ENCODE measurements at regions of chr15 and their contacts with region 1.

Region 1: DNA sequence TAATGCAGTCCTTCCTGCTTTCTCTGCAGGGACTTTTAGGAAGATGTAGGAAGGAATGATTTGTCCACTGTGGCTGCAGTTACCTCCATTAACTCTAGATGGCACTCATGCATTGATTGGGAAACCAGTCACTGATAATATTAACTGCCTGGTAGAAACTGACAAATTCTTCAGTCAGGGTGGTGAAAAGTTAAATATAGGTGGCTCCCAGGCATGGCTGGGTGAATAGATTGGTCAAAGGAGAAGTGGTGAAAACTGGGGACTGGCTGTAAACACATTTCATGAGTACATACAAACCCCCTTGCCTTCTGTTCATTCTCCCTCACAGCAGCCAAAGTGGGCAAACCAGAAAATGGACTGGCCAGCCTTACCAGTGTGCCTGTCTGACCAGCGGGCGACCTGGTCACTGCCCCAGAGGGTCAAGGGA is 333.4 kb downstream of the THSD4 start:
- DNase-seq: no peak
- H3K4me3 ChIP-seq: no peak overlapping the region
- H3K27ac ChIP-seq: no peak overlapping the region
- H3K4me1 ChIP-seq: peaks cover 0 to 4% (median 4%) of the 10 kb centered on the region in 4 donors
- H3K27me3 ChIP-seq: no peaks in the 10 kb centered on the region
- CTCF ChIP-seq: peak; percentile 85 to 93 (median 89)
- EP300 ChIP-seq: no peak
- POLR2A ChIP-seq: no peak

Region 2: GRCh38 chr15:71651750-71652186 is 203.1 kb after region 1 on chr15:
- intact Hi-C with region 1: loop called (anchors 2 kb)
- DNase-seq: peak; percentile 90
- H3K4me3 ChIP-seq: no peak overlapping the region
- H3K27ac ChIP-seq: no peak overlapping the region
- H3K4me1 ChIP-seq: peaks cover 6 to 30% (median 23%) of the 10 kb centered on the region in 4 donors
- H3K27me3 ChIP-seq: no peaks in the 10 kb centered on the region
- CTCF ChIP-seq: peak; percentile 46 to 62 (median 58)
- EP300 ChIP-seq: no peak
- POLR2A ChIP-seq: no peak

Region 3: DNA sequence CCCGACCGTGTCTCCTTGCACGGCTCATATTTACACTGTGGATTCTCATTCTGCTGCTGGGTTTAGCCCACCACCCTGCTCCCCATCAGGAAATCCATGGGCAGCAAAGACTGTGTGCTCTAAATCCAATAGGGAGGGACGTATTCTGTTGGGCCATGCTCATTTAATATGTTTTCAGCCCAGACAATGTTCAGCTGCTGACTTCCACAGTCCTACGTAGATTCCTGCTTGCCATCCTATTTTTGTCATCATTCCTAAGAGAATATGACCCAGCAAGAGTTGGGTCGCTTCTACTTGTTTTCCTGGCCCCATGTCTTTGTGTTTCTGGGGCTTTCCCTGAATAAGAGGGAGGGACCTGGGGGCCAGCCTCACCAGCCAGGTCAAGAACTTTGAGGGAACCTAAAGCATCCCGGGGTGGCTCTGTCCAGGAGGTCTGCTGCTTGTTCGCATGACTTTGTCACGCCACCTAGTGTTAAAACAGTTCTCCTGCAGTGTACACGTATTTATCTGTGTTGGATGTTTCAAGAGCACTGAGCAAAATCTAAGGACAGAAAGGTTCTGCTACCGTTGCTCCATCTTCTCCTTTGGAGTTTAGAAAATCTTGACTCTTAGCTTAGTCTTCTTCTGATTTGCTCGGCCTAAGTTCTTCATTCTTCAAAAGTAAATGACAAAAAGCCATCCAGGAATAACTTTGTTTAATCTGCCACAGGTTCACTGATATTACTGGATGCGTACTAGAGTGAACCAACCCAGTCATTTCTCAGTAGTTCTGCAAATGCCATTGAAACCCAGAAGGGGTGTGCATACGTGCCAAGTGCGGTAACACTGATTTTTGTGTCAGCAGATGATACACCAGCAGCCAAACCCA is 281.8 kb after region 1 on chr15:
- intact Hi-C with region 1: loop called (anchors 2 kb)
- DNase-seq: no peak
- H3K4me3 ChIP-seq: no peak overlapping the region
- H3K27ac ChIP-seq: no peak overlapping the region
- H3K4me1 ChIP-seq: peaks cover 4 to 9% (median 8%) of the 10 kb centered on the region in 4 donors
- H3K27me3 ChIP-seq: no peaks in the 10 kb centered on the region
- CTCF ChIP-seq: peak; percentile 75 to 82 (median 75)
- EP300 ChIP-seq: no peak
- POLR2A ChIP-seq: no peak